ENCODE measurements at regions of chr21 and their contacts with region 1.

Region 1: DNA sequence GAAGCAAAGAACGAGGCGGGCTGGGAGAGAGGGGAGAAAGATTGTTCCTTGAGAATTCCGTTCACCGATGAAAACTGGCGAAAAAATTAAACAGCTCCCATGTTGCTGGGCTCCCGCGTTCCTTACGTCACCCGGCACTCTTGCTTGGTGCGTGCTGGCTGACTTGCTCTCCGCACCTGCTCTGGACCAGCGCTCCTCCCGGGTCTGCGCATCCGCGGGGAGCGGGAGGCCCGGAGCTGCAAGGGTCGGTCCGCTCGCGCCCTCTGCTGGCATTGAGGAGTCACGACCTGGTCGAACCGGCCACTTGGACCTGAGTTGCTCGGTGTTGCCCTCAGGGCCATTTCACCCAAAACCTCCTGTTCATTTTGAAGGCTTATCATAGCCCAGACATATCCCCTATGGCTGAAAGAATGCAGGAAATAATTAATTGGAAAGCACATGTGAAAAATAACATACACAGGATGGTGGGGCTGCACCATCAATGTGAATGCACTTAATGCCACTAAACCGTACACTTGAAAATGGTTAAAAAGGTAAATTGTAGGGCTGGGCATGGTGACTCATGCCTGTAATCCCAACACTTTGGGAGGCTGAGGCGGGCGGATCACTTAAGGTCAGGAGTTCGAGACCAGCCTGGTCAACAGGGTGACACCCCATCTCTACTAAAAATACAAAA is 98.9 kb upstream of the BACE2 start:
- DNase-seq: peak; percentile 31 to 35
- ATAC-seq: no peak
- H3K4me3 ChIP-seq: peak overlapping the region in 1 of 4 donors; percentile 25
- H3K27ac ChIP-seq: no peak overlapping the region
- H3K4me1 ChIP-seq: peaks cover 0 to 4% of the 10 kb centered on the region in 2 donors
- H3K27me3 ChIP-seq: peaks cover 4 to 14% (median 8%) of the 10 kb centered on the region in 3 donors
- CTCF ChIP-seq: peak in 4 of 5 experiments; percentile 38 to 67 (median 56)
- POLR2A ChIP-seq: no peak

Region 2: DNA sequence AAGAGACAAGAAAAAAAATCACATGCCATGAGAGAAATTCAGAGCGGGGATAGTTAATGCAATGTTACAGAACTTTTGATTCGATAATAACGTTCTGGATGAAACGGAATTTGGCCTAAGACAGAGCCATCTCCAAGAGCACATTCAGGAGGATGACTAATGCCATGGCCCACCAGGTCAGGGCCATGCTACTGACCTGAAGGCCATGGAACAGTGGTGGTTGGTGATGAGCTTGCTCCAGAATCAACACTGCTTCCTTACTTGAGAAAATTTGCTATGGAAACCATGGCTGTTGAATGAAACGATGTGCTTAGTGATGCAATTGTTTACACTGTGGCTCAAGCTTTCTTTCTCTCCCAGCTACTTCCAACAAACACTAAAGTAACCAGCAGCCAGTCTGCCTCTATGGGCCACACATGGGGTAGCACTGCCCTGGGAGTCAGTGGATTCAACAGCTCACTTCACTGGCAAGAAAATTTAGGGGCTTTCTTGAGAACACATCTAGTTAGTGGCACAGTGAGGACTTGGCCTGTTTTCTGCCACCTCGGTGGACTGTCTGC is 902.7 kb before region 1 on chr21:
- in situ Hi-C with region 1: loop called in 1 of 4 experiments (anchors 25 kb)
- intact Hi-C with region 1: no loop called
- DNase-seq: no peak
- ATAC-seq: no peak
- H3K4me3 ChIP-seq: no peak overlapping the region
- H3K27ac ChIP-seq: no peak overlapping the region
- H3K4me1 ChIP-seq: no peaks in the 10 kb centered on the region
- H3K27me3 ChIP-seq: no peaks in the 10 kb centered on the region
- CTCF ChIP-seq: no peak
- POLR2A ChIP-seq: no peak

Region 3: DNA sequence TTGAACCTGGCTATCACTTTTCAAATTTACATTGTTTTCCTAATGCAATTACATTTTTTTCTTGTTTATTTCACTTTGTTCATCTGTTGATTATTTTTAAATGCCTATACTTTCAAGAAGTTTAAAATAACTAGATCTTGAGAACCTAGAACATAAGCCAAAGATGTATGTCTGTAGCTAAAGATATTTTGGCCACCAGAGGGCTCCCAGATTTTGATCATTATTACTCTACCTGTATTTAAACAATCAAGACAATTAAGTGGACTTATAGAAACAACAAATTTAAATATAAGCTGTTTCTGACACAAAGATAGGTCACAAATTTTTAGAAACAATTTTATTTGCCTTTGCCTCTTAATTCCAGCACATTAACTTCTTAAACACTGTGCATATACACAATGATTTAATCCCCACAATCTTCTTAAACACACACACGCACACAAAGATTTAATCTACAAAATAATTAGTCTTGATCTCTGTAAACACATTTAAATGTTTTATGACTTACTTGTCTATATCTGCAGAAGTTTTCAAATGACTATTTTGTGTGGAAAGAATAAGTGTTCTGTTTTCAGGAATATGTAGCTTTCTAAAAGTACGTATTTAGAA is 602.1 kb before region 1 on chr21:
- in situ Hi-C with region 1: loop called in 1 of 4 experiments (anchors 25 kb)
- intact Hi-C with region 1: no loop called
- DNase-seq: no peak
- ATAC-seq: no peak
- H3K4me3 ChIP-seq: no peak overlapping the region
- H3K27ac ChIP-seq: no peak overlapping the region
- H3K4me1 ChIP-seq: no peaks in the 10 kb centered on the region
- H3K27me3 ChIP-seq: no peaks in the 10 kb centered on the region
- CTCF ChIP-seq: no peak
- POLR2A ChIP-seq: no peak

Region 4: DNA sequence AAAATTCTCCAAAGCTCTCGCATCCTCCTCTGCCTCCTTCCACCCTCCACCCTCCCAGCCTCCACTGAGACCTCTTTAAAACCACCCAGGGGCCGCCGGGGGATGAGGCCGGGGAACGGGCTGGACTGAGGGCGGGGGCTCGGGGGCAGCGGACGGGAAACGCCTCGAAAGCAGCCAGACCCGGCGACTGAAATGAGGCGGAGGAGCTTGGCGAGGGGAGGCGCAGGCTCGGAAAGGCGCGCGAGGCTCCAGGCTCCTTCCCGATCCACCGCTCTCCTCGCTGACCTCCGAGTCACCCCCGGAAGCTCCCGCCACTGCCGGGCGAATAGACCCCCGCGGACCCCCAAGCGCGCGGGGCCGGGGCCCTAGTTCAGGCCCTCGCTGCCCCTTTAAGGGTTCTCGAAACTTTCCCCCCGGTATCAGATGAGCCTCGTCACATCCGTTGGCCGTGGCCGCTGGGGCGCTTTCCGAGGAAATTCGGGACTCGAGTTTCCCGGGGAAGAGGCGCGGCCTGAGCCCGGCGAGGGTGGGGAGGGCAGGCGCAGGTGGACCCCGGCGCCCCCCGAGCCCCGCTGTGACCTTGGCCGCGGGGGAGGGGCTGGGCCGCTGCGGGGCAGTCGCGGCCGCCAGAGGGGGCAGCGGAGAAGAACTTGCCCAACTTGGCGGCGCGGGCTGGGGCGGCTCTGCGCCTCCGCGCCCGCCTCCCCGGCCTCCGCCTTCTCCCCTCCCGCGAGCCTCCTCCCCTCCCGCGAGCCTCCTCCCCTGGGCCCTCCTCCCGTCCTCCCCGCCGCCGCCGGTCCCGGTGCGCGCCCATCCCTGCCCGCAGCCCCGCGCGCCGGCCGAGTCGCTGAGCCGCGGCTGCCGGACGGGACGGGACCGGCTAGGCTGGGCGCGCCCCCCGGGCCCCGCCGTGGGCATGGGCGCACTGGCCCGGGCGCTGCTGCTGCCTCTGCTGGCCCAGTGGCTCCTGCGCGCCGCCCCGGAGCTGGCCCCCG is 98.5 kb after region 1 on chr21 and contains the start of gene BACE2:
- in situ Hi-C with region 1: no loop called
- intact Hi-C with region 1: no loop called
- DNase-seq: peak; percentile 52 to 59
- ATAC-seq: peak; percentile 64 to 68
- H3K4me3 ChIP-seq: peak within 1 kb of the TSS; percentile 73 to 88 (median 84)
- H3K27ac ChIP-seq: peak within 1 kb of the TSS; percentile 85 to 89 (median 86)
- H3K4me1 ChIP-seq: peaks cover 17 to 18% of the 10 kb centered on the region in 2 donors
- H3K27me3 ChIP-seq: no peaks in the 10 kb centered on the region
- CTCF ChIP-seq: peak in 4 of 5 experiments; percentile 38 to 76 (median 66)
- POLR2A ChIP-seq: peak; percentile 54 to 66
- total RNA-seq, gene BACE2: 7.5 to 17.5 (median 9.3) TPM

Region 5: GRCh38 chr21:41460578-41461527 is 391.7 kb after region 1 on chr21:
- in situ Hi-C with region 1: no loop called
- intact Hi-C with region 1: no loop called
- DNase-seq: peak; percentile 34
- ATAC-seq: peak; percentile 45 to 66
- H3K4me3 ChIP-seq: no peak overlapping the region
- H3K27ac ChIP-seq: no peak overlapping the region
- H3K4me1 ChIP-seq: no peaks in the 10 kb centered on the region
- H3K27me3 ChIP-seq: peaks cover 0 to 4% (median 0%) of the 10 kb centered on the region in 3 donors
- CTCF ChIP-seq: peak; percentile 40 to 73 (median 64)
- POLR2A ChIP-seq: no peak

Measured in gastrocnemius medialis (tissue), 4 donors.